GM23248 (cell line): ENCODE measurements at regions of chr22 and their contacts with region 1.

Region 1: GRCh38 chr22:16774911-16775500 is 50.2 kb downstream of the XKR3 start:
- DNase-seq: peak; percentile 4
- H3K4me3 ChIP-seq: no peak overlapping the region
- H3K27ac ChIP-seq: no peak overlapping the region
- H3K4me1 ChIP-seq: no peaks in the 10 kb centered on the region
- H3K27me3 ChIP-seq: no peaks in the 10 kb centered on the region; the same call in 1 of the 2 replicates

Region 2: DNA sequence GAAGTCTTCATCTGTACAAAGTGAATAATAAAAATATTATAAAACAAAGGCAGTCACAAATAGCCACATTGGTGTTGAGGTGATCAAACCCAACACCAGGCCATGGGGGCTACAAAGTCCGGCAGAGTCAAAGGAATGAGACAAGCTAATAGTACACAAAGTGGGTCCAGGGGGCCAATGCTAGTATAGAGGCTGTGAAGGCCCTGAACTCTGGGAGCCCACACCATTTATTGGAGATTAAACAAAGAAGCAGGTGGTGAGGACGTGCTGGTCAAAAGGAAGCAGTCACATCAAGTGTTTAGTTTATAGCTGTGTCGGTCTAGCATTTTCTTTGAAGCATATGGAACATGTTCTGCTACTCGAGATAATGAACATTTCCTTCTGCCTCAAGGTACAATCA is 123.8 kb before region 1 on chr22:
- in situ Hi-C with region 1: loop called (anchors 25 kb)
- DNase-seq: no peak
- H3K4me3 ChIP-seq: no peak overlapping the region
- H3K27ac ChIP-seq: no peak overlapping the region
- H3K4me1 ChIP-seq: no peaks in the 10 kb centered on the region
- H3K27me3 ChIP-seq: no peaks in the 10 kb centered on the region